ENCODE measurements at regions of chr2 and their contacts with region 1.

Region 1: DNA sequence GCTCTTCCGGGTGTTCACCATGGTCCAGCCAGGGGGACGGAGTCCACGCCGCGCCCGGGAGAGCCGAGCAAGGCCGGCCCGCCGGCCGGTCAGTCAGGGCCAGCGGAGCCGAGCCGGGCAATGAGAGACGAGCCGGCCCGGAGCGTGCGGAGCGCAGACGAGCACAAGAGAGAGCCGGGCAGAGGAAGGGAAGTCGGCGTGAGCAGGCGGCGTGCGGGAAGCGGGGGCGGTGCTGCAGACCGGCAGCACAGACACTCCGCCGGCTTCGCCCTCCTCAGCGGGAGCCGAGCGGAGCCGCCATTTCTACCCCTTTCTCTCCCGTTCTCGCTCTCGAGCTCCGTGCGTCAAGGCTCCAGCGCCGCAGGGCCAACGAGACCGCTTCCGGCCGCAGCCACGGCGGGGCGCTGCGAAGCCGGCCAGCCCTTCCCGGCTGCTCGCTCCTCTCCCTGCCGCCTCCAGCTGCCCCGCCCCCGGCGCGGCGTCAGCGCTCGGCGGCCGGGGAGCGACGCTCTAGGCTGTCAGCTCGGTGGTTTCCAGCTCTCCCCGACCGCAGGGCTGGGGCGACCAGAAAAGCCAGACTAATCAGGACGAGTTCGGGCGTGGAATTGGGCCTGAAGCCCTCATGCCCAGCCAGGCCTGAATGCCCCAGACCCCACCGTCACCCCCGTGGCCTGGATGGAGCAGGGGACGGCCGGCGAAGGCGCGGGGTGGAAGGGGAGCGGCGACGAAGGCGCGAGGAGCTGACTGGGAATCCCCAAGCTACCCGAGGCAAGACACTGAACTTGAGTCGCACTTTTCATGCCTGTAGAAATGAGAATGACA is at the start of gene ATAD2B:
- DNase-seq: peak; percentile 94
- ATAC-seq: peak; percentile 91
- H3K4me3 ChIP-seq: peak within 1 kb of the TSS; percentile 88
- H3K27ac ChIP-seq: peak within 1 kb of the TSS; percentile 99
- H3K4me1 ChIP-seq: no peaks in the 10 kb centered on the region; the same call in 1 of the 2 replicates
- H3K27me3 ChIP-seq: no peaks in the 10 kb centered on the region
- CTCF ChIP-seq: peak; percentile 93
- POLR2A ChIP-seq: peak; percentile 86
- RAD21 ChIP-seq: peak; percentile 86
- total RNA-seq, gene ATAD2B: 5.0 and 9.4 TPM in 2 replicates

Region 2: GRCh38 chr2:23809150-23809549 is 117.8 kb before region 1 on chr2:
- CTCF ChIA-PET with region 1: no interaction called
- POLR2A ChIA-PET with region 1: no interaction called
- dilution Hi-C with region 1: no loop called
- in situ Hi-C with region 1: no loop called
- intact Hi-C with region 1: loop called (anchors 5 kb)
- DNase-seq: no peak
- ATAC-seq: peak; percentile 54
- H3K4me3 ChIP-seq: no peak overlapping the region
- H3K27ac ChIP-seq: no peak overlapping the region
- H3K4me1 ChIP-seq: no peaks in the 10 kb centered on the region
- H3K27me3 ChIP-seq: no peaks in the 10 kb centered on the region
- CTCF ChIP-seq: no peak
- POLR2A ChIP-seq: no peak
- RAD21 ChIP-seq: no peak

Region 3: DNA sequence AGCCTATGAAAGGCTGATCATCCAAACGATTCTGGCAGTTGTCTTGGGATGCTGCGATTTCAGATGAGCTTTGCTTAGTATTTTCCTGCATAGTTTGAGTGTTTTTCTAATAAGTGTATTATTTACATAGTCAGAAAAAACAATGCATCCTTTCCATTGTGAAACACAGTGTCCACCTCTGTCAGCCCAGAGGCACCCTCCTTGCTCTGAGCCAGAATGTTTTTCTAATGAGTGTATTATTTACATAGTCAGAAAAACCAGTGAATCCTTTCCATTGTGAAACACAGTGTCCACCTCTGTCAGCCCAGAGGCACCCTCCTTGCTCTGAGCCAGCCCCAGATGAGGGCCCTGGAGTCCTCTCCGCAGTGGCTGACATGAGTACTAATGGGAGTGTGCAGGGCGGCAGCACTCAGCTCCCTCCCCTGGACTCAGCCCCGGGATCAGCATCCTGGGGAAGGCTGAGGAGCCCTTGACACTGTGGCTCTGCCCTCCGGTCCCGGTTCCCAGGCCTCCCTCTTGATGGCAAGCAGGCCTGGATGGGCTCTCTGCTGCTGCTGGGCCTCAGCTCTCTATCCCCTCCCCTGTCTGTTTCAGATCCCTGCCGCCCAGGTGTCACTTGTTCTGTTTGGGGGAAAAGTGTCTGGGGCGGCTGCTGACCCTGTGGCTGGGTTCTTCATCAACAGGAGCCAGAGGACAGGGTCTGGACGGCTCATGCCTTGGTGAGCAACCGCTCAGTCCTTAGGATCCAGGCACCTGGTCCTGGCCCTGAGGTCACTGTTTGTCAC is 88.8 kb after region 1 on chr2:
- CTCF ChIA-PET with region 1: no interaction called
- POLR2A ChIA-PET with region 1: no interaction called
- dilution Hi-C with region 1: no loop called
- in situ Hi-C with region 1: no loop called
- intact Hi-C with region 1: loop called (anchors 2 kb)
- DNase-seq: peak; percentile 83
- ATAC-seq: peak; percentile 88
- H3K4me3 ChIP-seq: no peak overlapping the region
- H3K27ac ChIP-seq: peak overlapping the region; percentile 49
- H3K4me1 ChIP-seq: peaks cover 10% of the 10 kb centered on the region
- H3K27me3 ChIP-seq: peaks cover 2% of the 10 kb centered on the region; the same call in 1 of the 2 replicates
- CTCF ChIP-seq: no peak
- POLR2A ChIP-seq: no peak
- RAD21 ChIP-seq: no peak

Region 4: GRCh38 chr2:24038786-24039499 is 112.0 kb after region 1 on chr2:
- CTCF ChIA-PET with region 1: no interaction called
- POLR2A ChIA-PET with region 1: no interaction called
- dilution Hi-C with region 1: no loop called
- in situ Hi-C with region 1: no loop called
- intact Hi-C with region 1: no loop called
- DNase-seq: no peak
- ATAC-seq: no peak
- H3K4me3 ChIP-seq: no peak overlapping the region
- H3K27ac ChIP-seq: no peak overlapping the region
- H3K4me1 ChIP-seq: no peaks in the 10 kb centered on the region
- H3K27me3 ChIP-seq: no peaks in the 10 kb centered on the region
- CTCF ChIP-seq: no peak
- POLR2A ChIP-seq: no peak
- RAD21 ChIP-seq: no peak

Region 5: DNA sequence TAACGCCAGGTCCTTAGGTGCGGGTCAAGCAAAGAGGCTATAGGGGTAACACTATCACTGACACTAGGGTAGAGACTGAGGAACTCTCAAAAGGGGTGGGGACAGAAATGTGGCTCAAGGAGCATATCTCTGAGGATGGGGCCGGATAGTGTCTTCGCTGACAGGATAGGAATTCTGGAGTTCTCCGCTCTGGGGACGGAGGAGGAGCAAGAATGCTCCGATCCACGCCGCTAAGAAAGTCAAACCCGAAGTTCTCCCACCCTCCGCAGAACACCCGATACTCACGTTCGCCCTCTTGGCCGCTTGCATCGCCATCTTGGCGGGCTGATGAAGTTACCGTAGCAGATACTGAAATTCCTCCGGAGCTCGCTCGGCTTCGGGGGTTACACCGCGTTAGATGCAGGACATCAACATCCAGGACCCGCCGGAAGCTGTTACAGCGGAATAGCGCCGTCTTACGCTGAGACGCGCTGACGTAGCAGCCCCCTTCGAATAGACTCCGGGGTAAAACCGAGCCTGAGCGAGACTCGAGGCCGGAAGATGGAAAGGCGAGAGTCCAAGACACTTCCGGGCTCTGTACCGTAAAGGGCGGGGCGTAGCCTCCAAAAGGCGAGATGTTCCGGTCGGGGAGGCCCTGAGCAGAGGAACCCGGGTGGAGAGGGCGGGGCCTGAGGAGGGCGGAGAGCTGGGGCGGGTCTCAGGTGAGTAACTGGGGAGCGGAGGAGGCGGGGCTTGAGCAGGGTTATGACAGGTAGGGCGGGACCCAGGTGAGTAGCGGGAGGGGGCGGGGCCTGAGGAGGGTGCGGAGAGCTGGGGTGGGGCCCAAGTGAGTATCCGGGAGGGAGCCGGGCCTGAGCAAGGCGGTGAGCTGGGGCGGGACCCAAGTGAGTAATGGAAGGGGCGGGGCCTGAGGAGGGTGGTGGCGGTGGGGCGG is 149.2 kb after region 1 on chr2 and contains the start of gene SF3B6:
- CTCF ChIA-PET with region 1: interaction called, 3 read pairs
- POLR2A ChIA-PET with region 1: no interaction called
- dilution Hi-C with region 1: no loop called
- in situ Hi-C with region 1: no loop called
- intact Hi-C with region 1: loop called (anchors 1 kb)
- DNase-seq: peak; percentile 99
- ATAC-seq: peak; percentile 93
- H3K4me3 ChIP-seq: peak within 1 kb of the TSS; percentile 73
- H3K27ac ChIP-seq: peak within 1 kb of the TSS; percentile 68
- H3K4me1 ChIP-seq: peaks cover 3% of the 10 kb centered on the region; the same call in 1 of the 2 replicates
- H3K27me3 ChIP-seq: no peaks in the 10 kb centered on the region
- CTCF ChIP-seq: no peak
- POLR2A ChIP-seq: peak; percentile 59; the same call in 1 of the 2 replicates
- RAD21 ChIP-seq: no peak
- total RNA-seq, gene SF3B6: 143 and 224 TPM in 2 replicates

Region 6: GRCh38 chr2:24359129-24360049 is 432.4 kb after region 1 on chr2:
- CTCF ChIA-PET with region 1: no interaction called
- POLR2A ChIA-PET with region 1: no interaction called
- dilution Hi-C with region 1: no loop called
- in situ Hi-C with region 1: no loop called
- intact Hi-C with region 1: loop called (anchors 10 kb)
- DNase-seq: no peak
- ATAC-seq: no peak
- H3K4me3 ChIP-seq: peak overlapping the region; percentile 97
- H3K27ac ChIP-seq: peak overlapping the region; percentile 47
- H3K4me1 ChIP-seq: no peaks in the 10 kb centered on the region; the same call in 1 of the 2 replicates
- H3K27me3 ChIP-seq: no peaks in the 10 kb centered on the region; the same call in 1 of the 2 replicates
- CTCF ChIP-seq: no peak
- POLR2A ChIP-seq: no peak
- RAD21 ChIP-seq: no peak